Endothelial cell of umbilical vein (primary cell): ENCODE measurements at regions of chr7 and their contacts with region 1.

Region 1: GRCh38 chr7:80107278-80107677 is 27.4 kb upstream of the GNAI1 start:
- DNase-seq: peak; percentile 59
- H3K4me3 ChIP-seq: peak overlapping the region in 1 of 3 experiments; percentile 40
- H3K27ac ChIP-seq: peak overlapping the region; percentile 58
- H3K4me1 ChIP-seq: peaks cover 28% of the 10 kb centered on the region
- H3K27me3 ChIP-seq: no peaks in the 10 kb centered on the region
- CTCF ChIP-seq: no peak
- POLR2A ChIP-seq: no peak

Region 2: DNA sequence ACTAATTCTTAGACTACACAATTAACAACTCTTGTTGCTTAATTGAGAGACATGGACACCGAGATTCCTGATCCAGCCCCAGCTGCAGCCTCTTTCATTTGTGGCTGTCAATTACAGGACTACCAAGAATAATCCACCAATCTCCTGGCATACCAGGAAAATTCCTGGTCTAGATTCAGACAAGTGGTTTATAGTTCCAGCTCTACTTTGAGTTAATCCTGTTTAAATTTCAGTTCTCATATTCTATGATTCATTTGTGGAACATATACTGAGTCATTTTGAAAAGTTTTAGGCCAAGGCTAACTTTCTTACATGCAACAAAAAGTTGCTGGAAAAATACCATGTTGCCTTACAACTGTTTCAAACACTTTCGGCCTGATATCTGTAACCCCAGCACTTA is 907.3 kb before region 1 on chr7:
- CTCF ChIA-PET with region 1: no interaction called
- POLR2A ChIA-PET with region 1: no interaction called
- dilution Hi-C with region 1: no loop called
- intact Hi-C with region 1: no loop called
- DNase-seq: no peak
- H3K4me3 ChIP-seq: no peak overlapping the region
- H3K27ac ChIP-seq: no peak overlapping the region
- H3K4me1 ChIP-seq: no peaks in the 10 kb centered on the region
- H3K27me3 ChIP-seq: no peaks in the 10 kb centered on the region
- CTCF ChIP-seq: no peak
- POLR2A ChIP-seq: no peak

Region 3: DNA sequence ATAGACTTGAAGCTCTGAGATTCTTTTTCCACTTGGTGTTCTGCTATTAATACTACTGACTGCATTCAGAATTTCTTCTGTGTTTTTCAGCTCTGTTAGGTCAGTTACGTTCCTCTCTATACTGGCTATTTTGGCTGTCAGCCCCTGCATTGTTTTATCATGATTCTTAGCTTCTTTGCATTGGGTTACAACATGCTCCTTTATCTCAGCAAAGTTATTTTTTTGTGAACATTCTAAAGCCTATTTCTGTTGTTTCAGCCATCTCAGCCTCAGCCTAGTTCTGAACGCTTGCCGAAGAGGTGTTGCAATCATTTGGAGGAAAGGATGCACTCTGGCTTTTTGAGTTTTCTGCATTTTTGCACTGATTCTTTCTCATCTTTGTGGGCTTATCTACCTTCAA is 174.1 kb before region 1 on chr7:
- CTCF ChIA-PET with region 1: no interaction called
- POLR2A ChIA-PET with region 1: no interaction called
- dilution Hi-C with region 1: no loop called
- intact Hi-C with region 1: no loop called
- DNase-seq: no peak
- H3K4me3 ChIP-seq: no peak overlapping the region
- H3K27ac ChIP-seq: no peak overlapping the region
- H3K4me1 ChIP-seq: no peaks in the 10 kb centered on the region
- H3K27me3 ChIP-seq: no peaks in the 10 kb centered on the region
- CTCF ChIP-seq: no peak
- POLR2A ChIP-seq: no peak

Region 4: DNA sequence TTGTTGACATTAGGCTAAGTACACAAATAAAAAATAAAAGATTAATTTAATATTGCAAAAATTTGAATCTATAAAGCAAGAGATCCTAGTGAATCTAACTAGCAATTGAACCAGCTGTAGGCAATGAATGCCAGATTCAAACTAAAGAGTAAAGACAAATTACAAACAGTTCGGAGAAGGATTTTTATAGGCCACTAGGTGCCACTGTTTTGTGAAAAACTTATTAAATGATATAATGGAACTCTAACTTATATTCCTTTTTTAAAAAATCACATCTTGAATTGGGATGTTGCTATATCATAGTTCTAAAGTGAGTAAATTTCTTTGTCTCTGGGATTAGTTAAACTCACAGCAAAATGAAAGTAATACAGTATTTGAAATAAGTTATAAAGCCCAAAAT is 11.7 kb before region 1 on chr7:
- CTCF ChIA-PET with region 1: interaction called, 25 read pairs
- POLR2A ChIA-PET with region 1: no interaction called
- dilution Hi-C with region 1: no loop called
- intact Hi-C with region 1: no loop called
- DNase-seq: peak; percentile 37
- H3K4me3 ChIP-seq: no peak overlapping the region
- H3K27ac ChIP-seq: no peak overlapping the region
- H3K4me1 ChIP-seq: no peaks in the 10 kb centered on the region
- H3K27me3 ChIP-seq: no peaks in the 10 kb centered on the region
- CTCF ChIP-seq: peak; percentile 8 to 29
- POLR2A ChIP-seq: no peak